Motor neuron (in vitro differentiated cells): ENCODE measurements at regions of chr5 and their contacts with region 1.

Region 1: DNA sequence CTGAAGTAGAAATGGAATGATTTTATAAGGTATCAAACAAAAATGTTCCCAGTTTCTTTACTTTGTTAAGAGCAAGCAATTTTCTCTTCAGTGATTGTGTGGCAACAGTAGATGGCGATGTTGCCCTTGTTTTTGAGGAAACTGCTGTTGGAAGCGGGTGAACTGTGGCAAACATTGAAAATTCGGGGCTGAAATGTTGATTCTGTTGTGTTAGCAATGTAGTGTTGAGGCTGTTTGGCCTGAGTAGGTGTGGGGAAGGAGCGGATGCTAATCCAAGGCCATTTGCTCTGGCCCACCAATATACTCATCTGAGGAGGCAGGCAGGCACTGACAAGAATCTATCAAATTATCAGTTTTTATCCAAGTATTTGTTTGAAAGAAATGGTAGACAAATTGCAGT is 129.8 kb downstream of the SLC12A2 start:
- ATAC-seq: peak; percentile 6 to 70 (median 52)
- H3K4me3 ChIP-seq: no peak overlapping the region
- H3K27ac ChIP-seq: no peak overlapping the region
- H3K4me1 ChIP-seq: no peaks in the 10 kb centered on the region

Region 2: DNA sequence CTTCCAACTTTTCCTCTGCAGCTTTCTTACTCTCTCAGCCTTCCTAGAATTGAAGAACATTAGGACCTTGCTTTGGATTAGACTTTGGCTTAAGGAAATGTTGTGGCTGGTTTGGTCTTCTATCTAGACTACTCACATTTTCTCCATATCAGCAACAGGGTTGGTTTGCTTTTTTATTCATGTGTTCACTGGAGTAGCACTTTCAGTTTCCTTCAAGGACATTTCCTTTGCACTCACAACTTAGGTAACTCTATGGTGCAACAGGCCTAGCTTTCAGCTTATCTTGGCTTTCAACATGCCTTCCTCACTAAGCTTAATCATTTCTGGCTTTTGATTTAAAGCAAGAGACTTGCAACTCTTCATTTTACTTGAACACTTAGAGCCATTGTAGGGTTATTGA is 357.0 kb before region 1 on chr5:
- in situ Hi-C with region 1: no loop called
- ATAC-seq: no peak
- H3K4me3 ChIP-seq: no peak overlapping the region
- H3K27ac ChIP-seq: no peak overlapping the region
- H3K4me1 ChIP-seq: no peaks in the 10 kb centered on the region

Region 3: GRCh38 chr5:128498844-128499455 is 285.6 kb after region 1 on chr5:
- in situ Hi-C with region 1: loop called in 4 of 9 experiments (anchors 5 to 10 kb)
- ATAC-seq: peak in 3 of 8 experiments; percentile 63 to 87 (median 74)
- H3K4me3 ChIP-seq: no peak overlapping the region
- H3K27ac ChIP-seq: no peak overlapping the region
- H3K4me1 ChIP-seq: no peaks in the 10 kb centered on the region

Region 4: DNA sequence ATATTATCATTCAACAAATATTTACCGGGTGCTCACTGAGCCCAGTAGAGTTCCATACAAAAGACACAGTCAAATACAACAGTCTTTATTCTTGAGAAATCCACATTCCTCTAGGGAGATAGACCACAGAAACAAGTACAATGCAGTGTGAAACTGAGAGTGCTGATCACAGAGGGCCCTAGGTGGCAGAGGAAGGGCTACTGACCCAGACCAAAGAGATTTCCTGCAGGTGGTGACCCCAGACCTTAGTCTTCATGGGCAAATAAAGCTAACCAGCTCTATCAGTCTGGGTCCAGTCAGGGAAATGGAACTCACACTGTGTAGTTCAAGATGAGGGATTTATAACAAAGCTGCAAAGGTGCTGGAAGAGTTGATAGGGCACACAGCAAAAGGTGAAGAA is 641.6 kb after region 1 on chr5:
- in situ Hi-C with region 1: no loop called
- ATAC-seq: no peak
- H3K4me3 ChIP-seq: no peak overlapping the region
- H3K27ac ChIP-seq: no peak overlapping the region
- H3K4me1 ChIP-seq: no peaks in the 10 kb centered on the region